CD4-positive, alpha-beta T cell (primary cell): ENCODE measurements at regions of chr5 and their contacts with region 1.

Region 1: GRCh38 chr5:177516604-177517568 is at the start of gene DDX41:
- DNase-seq: peak; percentile 88 to 98 (median 94)
- ATAC-seq: peak; percentile 90
- H3K4me3 ChIP-seq: peak within 1 kb of the TSS; percentile 72
- H3K4me3 Mint-ChIP-seq: peak within 1 kb of the TSS; percentile 93
- H3K27ac ChIP-seq: peak within 1 kb of the TSS; percentile 36 to 54
- H3K27ac Mint-ChIP-seq: peak within 1 kb of the TSS; percentile 84
- H3K4me1 ChIP-seq: peaks cover 51% of the 10 kb centered on the region
- H3K4me1 Mint-ChIP-seq: peaks cover 43% of the 10 kb centered on the region
- H3K27me3 ChIP-seq: no peaks in the 10 kb centered on the region
- H3K27me3 Mint-ChIP-seq: no peaks in the 10 kb centered on the region
- CTCF ChIP-seq: no peak
- total RNA-seq, gene DDX41: 49.6 to 49.7 TPM

Region 2: GRCh38 chr5:177592010-177592834 is 75.3 kb after region 1 on chr5 and contains the start of gene TMED9:
- CTCF ChIA-PET with region 1: no interaction called
- POLR2A ChIA-PET with region 1: no interaction called
- intact Hi-C with region 1: loop called in 1 of 2 experiments (anchors 1 kb)
- DNase-seq: peak; percentile 77 to 94 (median 86)
- ATAC-seq: peak; percentile 99
- H3K4me3 ChIP-seq: peak within 1 kb of the TSS; percentile 71
- H3K4me3 Mint-ChIP-seq: peak within 1 kb of the TSS; percentile 100
- H3K27ac ChIP-seq: peak within 1 kb of the TSS; percentile 64 to 69
- H3K27ac Mint-ChIP-seq: peak within 1 kb of the TSS; percentile 87
- H3K4me1 ChIP-seq: peaks cover 32% of the 10 kb centered on the region
- H3K4me1 Mint-ChIP-seq: peaks cover 31% of the 10 kb centered on the region
- H3K27me3 ChIP-seq: no peaks in the 10 kb centered on the region
- H3K27me3 Mint-ChIP-seq: peaks cover 24% of the 10 kb centered on the region
- CTCF ChIP-seq: no peak
- total RNA-seq, gene TMED9: 42.7 to 47.8 TPM